ENCODE measurements at regions of chr1 and their contacts with region 1.

Region 1: GRCh38 chr1:113168946-113169345 is 95.9 kb downstream of the LRIG2 start:
- DNase-seq: no peak
- H3K4me3 ChIP-seq: no peak overlapping the region
- H3K27ac ChIP-seq: no peak overlapping the region
- H3K4me1 ChIP-seq: no peaks in the 10 kb centered on the region
- H3K27me3 ChIP-seq: no peaks in the 10 kb centered on the region
- CTCF ChIP-seq: no peak
- EP300 ChIP-seq: no peak
- POLR2A ChIP-seq: no peak

Region 2: GRCh38 chr1:111801071-111801841 is 1367.7 kb before region 1 on chr1:
- in situ Hi-C with region 1: no loop called
- intact Hi-C with region 1: no loop called
- DNase-seq: no peak
- H3K4me3 ChIP-seq: no peak overlapping the region
- H3K27ac ChIP-seq: no peak overlapping the region
- H3K4me1 ChIP-seq: no peaks in the 10 kb centered on the region
- H3K27me3 ChIP-seq: no peaks in the 10 kb centered on the region
- CTCF ChIP-seq: no peak
- EP300 ChIP-seq: no peak
- POLR2A ChIP-seq: no peak

Region 3: GRCh38 chr1:113191579-113192076 is 22.7 kb after region 1 on chr1:
- in situ Hi-C with region 1: no loop called
- intact Hi-C with region 1: loop called (anchors 1 kb)
- DNase-seq: peak; percentile 68
- H3K4me3 ChIP-seq: no peak overlapping the region
- H3K27ac ChIP-seq: peak overlapping the region; percentile 38 to 74 (median 62)
- H3K4me1 ChIP-seq: peaks cover 0 to 18% (median 5%) of the 10 kb centered on the region in 4 donors
- H3K27me3 ChIP-seq: no peaks in the 10 kb centered on the region
- CTCF ChIP-seq: no peak
- EP300 ChIP-seq: no peak
- POLR2A ChIP-seq: no peak

Region 4: GRCh38 chr1:113991467-113991997 is 822.6 kb after region 1 on chr1:
- in situ Hi-C with region 1: no loop called
- intact Hi-C with region 1: no loop called
- DNase-seq: no peak
- H3K4me3 ChIP-seq: no peak overlapping the region
- H3K27ac ChIP-seq: no peak overlapping the region
- H3K4me1 ChIP-seq: no peaks in the 10 kb centered on the region
- H3K27me3 ChIP-seq: no peaks in the 10 kb centered on the region
- CTCF ChIP-seq: no peak
- EP300 ChIP-seq: no peak
- POLR2A ChIP-seq: no peak

Measured in transverse colon (tissue), 4 donors.